ENCODE measurements at regions of chr5 and their contacts with region 1.

Region 1: GRCh38 chr5:154072414-154073171 is 33.8 kb downstream of the MFAP3 start:
- DNase-seq: peak; percentile 92
- ATAC-seq: peak; percentile 83
- H3K4me3 Mint-ChIP-seq: no peak overlapping the region
- H3K27ac Mint-ChIP-seq: no peak overlapping the region
- H3K4me1 Mint-ChIP-seq: peaks cover 21% of the 10 kb centered on the region
- H3K27me3 Mint-ChIP-seq: no peaks in the 10 kb centered on the region

Region 2: DNA sequence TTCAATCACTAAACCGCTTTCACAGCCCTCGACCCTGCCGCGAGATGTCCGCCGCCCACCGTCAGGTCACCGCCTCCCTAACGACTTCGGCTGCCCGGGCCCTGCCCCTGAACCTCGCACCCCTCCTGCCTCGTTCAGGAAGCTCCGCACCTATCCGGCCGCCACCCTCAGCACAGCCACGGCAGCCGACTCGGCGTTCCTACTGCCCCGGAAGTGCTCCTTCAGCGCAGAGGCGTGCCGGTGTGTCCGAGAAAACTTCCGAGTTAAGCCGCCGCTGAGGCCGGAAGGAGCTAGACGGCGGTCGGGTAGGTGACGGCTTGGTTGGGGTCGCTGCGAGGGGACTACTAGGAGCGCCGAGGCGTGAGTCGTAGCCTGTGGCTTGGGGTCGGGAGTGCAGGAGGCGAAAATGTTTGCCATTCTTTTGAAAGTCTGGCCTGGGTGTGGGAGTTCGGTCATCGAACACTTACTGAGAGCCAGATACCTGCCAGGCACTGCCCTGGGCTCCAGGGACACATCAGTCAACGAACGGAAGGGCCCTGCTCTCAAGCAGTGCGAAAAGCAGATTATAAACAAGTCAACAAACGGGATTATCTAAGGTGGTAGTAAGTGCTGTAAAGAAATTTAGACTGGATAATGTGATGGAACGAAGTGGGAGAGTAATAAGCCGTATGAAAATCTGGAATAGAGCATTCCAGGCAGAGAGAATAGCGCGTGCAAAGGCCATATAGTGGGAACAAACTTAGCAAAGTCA is 33.7 kb before region 1 on chr5 and contains the starts of genes FAM114A2 and MFAP3:
- CTCF ChIA-PET with region 1: interaction called, 13 read pairs
- POLR2A ChIA-PET with region 1: no interaction called
- intact Hi-C with region 1: loop called in 1 of 2 experiments (anchors 2 kb)
- DNase-seq: peak; percentile 94
- ATAC-seq: peak; percentile 99
- H3K4me3 Mint-ChIP-seq: peak within 1 kb of the TSS; percentile 100
- H3K27ac Mint-ChIP-seq: peak within 1 kb of the TSS; percentile 92
- H3K4me1 Mint-ChIP-seq: peaks cover 55% of the 10 kb centered on the region
- H3K27me3 Mint-ChIP-seq: no peaks in the 10 kb centered on the region
- total RNA-seq, gene FAM114A2: 27.9 to 28.5 TPM
- total RNA-seq, gene MFAP3: 13.2 to 13.5 TPM

Region 3: GRCh38 chr5:154087257-154087656 is 14.7 kb after region 1 on chr5:
- CTCF ChIA-PET with region 1: interaction called, 13 read pairs
- POLR2A ChIA-PET with region 1: no interaction called
- intact Hi-C with region 1: no loop called
- DNase-seq: no peak
- ATAC-seq: no peak
- H3K4me3 Mint-ChIP-seq: no peak overlapping the region
- H3K27ac Mint-ChIP-seq: no peak overlapping the region
- H3K4me1 Mint-ChIP-seq: peaks cover 4% of the 10 kb centered on the region
- H3K27me3 Mint-ChIP-seq: peaks cover 2% of the 10 kb centered on the region

Region 4: GRCh38 chr5:154189819-154190594 is 117.4 kb after region 1 on chr5:
- CTCF ChIA-PET with region 1: interaction called, 17 read pairs
- POLR2A ChIA-PET with region 1: no interaction called
- intact Hi-C with region 1: loop called in 1 of 2 experiments (anchors 2 kb)
- DNase-seq: peak; percentile 85
- ATAC-seq: peak; percentile 72
- H3K4me3 Mint-ChIP-seq: peak overlapping the region; percentile 77
- H3K27ac Mint-ChIP-seq: peak overlapping the region; percentile 69
- H3K4me1 Mint-ChIP-seq: peaks cover 28% of the 10 kb centered on the region
- H3K27me3 Mint-ChIP-seq: peaks cover 9% of the 10 kb centered on the region

Region 5: GRCh38 chr5:154405078-154405792 is 332.6 kb after region 1 on chr5:
- CTCF ChIA-PET with region 1: interaction called, 55 read pairs
- POLR2A ChIA-PET with region 1: interaction called, 4 read pairs
- intact Hi-C with region 1: loop called (anchors 1 kb)
- DNase-seq: peak; percentile 89
- ATAC-seq: peak; percentile 100
- H3K4me3 Mint-ChIP-seq: peak overlapping the region; percentile 39
- H3K27ac Mint-ChIP-seq: peak overlapping the region; percentile 60
- H3K4me1 Mint-ChIP-seq: peaks cover 8% of the 10 kb centered on the region
- H3K27me3 Mint-ChIP-seq: no peaks in the 10 kb centered on the region

Region 6: GRCh38 chr5:154610321-154611154 is 537.9 kb after region 1 on chr5:
- CTCF ChIA-PET with region 1: no interaction called
- POLR2A ChIA-PET with region 1: no interaction called
- intact Hi-C with region 1: loop called (anchors 1 to 10 kb)
- DNase-seq: peak; percentile 89
- ATAC-seq: peak; percentile 98
- H3K4me3 Mint-ChIP-seq: peak overlapping the region; percentile 22
- H3K27ac Mint-ChIP-seq: no peak overlapping the region
- H3K4me1 Mint-ChIP-seq: peaks cover 7% of the 10 kb centered on the region
- H3K27me3 Mint-ChIP-seq: peaks cover 36% of the 10 kb centered on the region

Measured in activated CD4-positive, alpha-beta T cell treated with anti-CD3 and anti-CD28 coated beads for 36 hours (primary cell).